GM10248 (cell line): ENCODE measurements at regions of chr5 and their contacts with region 1.

Region 1: GRCh38 chr5:90446961-90447360 is 27.6 kb downstream of the MBLAC2 start:
- DNase-seq: no peak
- CTCF ChIP-seq: no peak

Region 2: GRCh38 chr5:90386099-90386710 is 60.8 kb before region 1 on chr5:
- CTCF ChIA-PET with region 1: no interaction called
- POLR2A ChIA-PET with region 1: no interaction called
- DNase-seq: no peak
- CTCF ChIP-seq: peak; percentile 35

Region 3: DNA sequence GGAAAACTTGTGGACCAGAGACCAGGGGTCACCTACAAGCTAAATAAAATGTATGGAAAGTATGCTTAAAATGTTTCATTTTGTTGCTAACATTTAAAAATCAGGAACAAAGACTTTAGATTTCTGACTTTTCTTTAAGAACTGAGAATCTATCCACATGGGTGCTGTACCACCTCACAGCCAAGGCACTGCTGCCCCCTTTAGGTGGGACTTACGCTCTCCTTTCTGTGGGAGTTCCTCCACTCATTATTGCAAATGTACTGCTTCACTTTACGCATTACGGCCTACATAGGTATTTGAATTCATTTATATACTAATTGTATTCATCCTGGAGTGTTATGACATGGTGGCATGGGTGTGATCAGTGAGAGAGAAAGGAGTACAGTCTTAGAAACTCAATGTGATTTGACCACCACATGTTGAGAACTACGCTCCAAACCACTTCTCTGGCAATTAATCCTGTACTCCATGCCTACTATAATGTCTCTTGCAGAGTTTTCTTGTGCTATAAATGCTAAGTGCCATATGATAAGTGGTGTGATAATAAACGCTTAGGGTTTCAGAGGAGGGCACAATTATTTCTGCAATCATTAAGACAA is 12.7 kb before region 1 on chr5:
- CTCF ChIA-PET with region 1: interaction called, 27 read pairs
- POLR2A ChIA-PET with region 1: no interaction called
- DNase-seq: no peak
- CTCF ChIP-seq: peak; percentile 78